HCT116 (cell line): ENCODE measurements at regions of chr14 and their contacts with region 1.

Region 1: GRCh38 chr14:56491299-56492285 is 88.0 kb upstream of the TMEM260 start:
- DNase-seq: peak; percentile 79
- ATAC-seq: peak; percentile 89
- H3K4me3 ChIP-seq: no peak overlapping the region
- H3K27ac ChIP-seq: no peak overlapping the region
- H3K4me1 ChIP-seq: no peaks in the 10 kb centered on the region
- H3K27me3 ChIP-seq: 0 out of 2 replicates have a peak, but pooled peaks cover 4% of the 10 kb centered on the region
- CTCF ChIP-seq: peak; percentile 55 to 81 (median 76); a peak in 5 of 6 replicates
- POLR2A ChIP-seq: no peak
- RAD21 ChIP-seq: peak; percentile 77

Region 2: DNA sequence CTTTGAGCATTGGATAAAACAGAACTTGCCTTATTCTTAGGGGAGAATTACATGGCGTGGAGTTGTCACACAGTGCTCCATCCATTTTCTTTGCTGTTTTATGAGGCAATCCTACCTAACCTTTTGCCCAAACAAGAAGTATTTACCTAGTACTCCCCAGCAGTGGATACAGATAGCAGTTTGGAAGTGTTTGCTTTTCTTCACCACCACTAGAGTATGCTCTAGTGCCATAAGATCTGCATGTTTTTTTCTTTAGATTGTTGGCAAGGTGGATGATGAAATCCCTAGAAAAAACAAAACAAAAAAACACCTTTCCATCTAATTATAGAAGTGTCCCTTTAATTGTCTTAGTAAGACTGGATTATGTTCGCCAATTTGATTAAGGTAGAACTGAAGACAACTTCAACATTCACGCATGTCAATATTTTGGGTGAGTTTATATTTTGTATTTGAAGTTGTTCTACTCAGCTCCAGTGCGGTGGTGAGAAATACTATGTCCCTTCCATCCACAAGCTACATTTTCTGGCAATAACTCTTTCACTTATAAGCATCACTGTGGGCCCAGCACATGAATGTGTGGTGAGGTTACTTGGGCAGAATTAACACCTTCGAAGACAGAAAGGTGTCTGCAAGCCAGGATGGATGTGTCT is 64.5 kb after region 1 on chr14:
- CTCF ChIA-PET with region 1: interaction called, 11 read pairs
- POLR2A ChIA-PET with region 1: no interaction called
- RAD21 ChIA-PET with region 1: no interaction called
- intact Hi-C with region 1: no loop called
- DNase-seq: peak; percentile 60
- ATAC-seq: peak; percentile 81
- H3K4me3 ChIP-seq: no peak overlapping the region
- H3K27ac ChIP-seq: no peak overlapping the region
- H3K4me1 ChIP-seq: no peaks in the 10 kb centered on the region
- H3K27me3 ChIP-seq: peaks cover 36% of the 10 kb centered on the region; the same call in 1 of the 2 replicates
- CTCF ChIP-seq: peak; percentile 65 to 70 (median 68)
- POLR2A ChIP-seq: no peak
- RAD21 ChIP-seq: peak; percentile 81

Region 3: DNA sequence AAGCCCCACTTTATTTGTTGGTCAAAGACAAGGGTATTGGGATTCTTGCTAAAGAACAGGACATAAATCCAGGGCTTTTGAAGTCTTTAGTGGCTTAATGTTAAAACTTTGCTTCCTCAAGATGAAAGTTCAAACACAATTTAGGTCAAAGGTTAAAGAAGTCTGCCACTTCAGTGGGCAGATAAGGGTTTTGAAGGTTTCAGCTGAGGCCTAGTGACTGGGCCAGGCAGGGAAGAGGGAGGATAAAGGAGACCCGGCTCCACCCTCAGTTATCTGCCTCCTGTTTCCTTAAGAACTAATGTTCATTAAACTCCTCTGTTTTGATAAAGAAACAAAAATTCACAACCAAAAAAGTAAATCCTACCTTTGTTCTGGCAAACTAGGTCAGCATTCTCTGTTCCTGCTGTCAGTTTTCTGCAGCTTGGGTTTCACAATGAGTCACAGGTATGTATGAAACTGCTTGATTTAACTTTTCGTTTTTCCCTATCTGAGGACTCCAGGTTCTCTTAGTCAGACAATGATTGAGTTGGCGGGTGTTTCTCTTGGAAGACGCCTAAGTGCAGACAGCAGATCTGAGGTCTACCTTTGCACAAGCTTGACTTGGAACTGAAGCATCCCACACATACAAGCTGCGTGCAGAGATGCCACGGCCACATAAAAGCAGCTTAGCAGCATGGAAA is 568.8 kb after region 1 on chr14:
- CTCF ChIA-PET with region 1: interaction called, 3 read pairs
- POLR2A ChIA-PET with region 1: no interaction called
- RAD21 ChIA-PET with region 1: no interaction called
- intact Hi-C with region 1: loop called (anchors 5 kb)
- DNase-seq: no peak
- ATAC-seq: no peak
- H3K4me3 ChIP-seq: no peak overlapping the region
- H3K27ac ChIP-seq: no peak overlapping the region
- H3K4me1 ChIP-seq: peaks cover 10 to 14% of the 10 kb centered on the region in 2 experiments
- H3K27me3 ChIP-seq: no peaks in the 10 kb centered on the region
- CTCF ChIP-seq: no peak
- POLR2A ChIP-seq: no peak
- RAD21 ChIP-seq: no peak

Region 4: DNA sequence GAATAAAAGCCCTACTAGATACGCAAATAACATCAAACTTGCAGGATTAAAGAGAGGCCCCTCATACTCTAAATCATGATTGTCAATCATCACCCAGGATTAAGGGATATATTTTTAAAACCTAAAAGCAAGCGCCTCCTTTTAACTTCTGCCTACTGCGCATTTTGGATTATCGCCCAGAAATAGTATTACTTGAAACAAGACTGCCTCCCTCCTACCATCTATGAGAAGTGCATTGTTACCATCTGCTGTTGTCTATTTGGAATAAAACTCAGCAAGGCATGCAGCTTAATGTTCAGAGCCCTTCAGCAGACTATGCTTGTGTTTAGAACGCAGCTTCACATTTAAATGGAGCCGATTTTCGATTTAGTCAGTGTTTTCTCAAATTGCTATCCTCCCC is 697.5 kb after region 1 on chr14:
- CTCF ChIA-PET with region 1: interaction called, 25 read pairs
- POLR2A ChIA-PET with region 1: no interaction called
- RAD21 ChIA-PET with region 1: interaction called in 1 of 2 experiments, 3 read pairs
- intact Hi-C with region 1: no loop called
- DNase-seq: peak; percentile 15
- ATAC-seq: peak; percentile 65
- H3K4me3 ChIP-seq: no peak overlapping the region
- H3K27ac ChIP-seq: no peak overlapping the region
- H3K4me1 ChIP-seq: no peaks in the 10 kb centered on the region
- H3K27me3 ChIP-seq: peaks cover 29% of the 10 kb centered on the region
- CTCF ChIP-seq: peak in 2 of 3 experiments; percentile 33 to 37; a peak in 3 of 6 replicates
- POLR2A ChIP-seq: no peak
- RAD21 ChIP-seq: peak; percentile 52

Region 5: GRCh38 chr14:57317316-57317715 is 825.7 kb after region 1 on chr14:
- CTCF ChIA-PET with region 1: interaction called, 43 read pairs
- POLR2A ChIA-PET with region 1: no interaction called
- RAD21 ChIA-PET with region 1: no interaction called
- intact Hi-C with region 1: loop called (anchors 1 kb)
- DNase-seq: peak; percentile 79
- ATAC-seq: peak; percentile 91
- H3K4me3 ChIP-seq: no peak overlapping the region
- H3K27ac ChIP-seq: no peak overlapping the region
- H3K4me1 ChIP-seq: no peaks in the 10 kb centered on the region
- H3K27me3 ChIP-seq: peaks cover 17% of the 10 kb centered on the region; the same call in 1 of the 2 replicates
- CTCF ChIP-seq: peak; percentile 76 to 89 (median 82)
- POLR2A ChIP-seq: no peak
- RAD21 ChIP-seq: peak; percentile 81